Activated CD4-positive, alpha-beta T cell treated with anti-CD3 and anti-CD28 coated beads for 36 hours (primary cell): ENCODE measurements at regions of chr12 and their contacts with region 1.

Region 1: GRCh38 chr12:27498149-27498548 is 25.9 kb upstream of the PPFIBP1 start:
- DNase-seq: peak; percentile 13
- ATAC-seq: peak; percentile 93
- H3K4me3 Mint-ChIP-seq: no peak overlapping the region
- H3K27ac Mint-ChIP-seq: no peak overlapping the region
- H3K4me1 Mint-ChIP-seq: peaks cover 26% of the 10 kb centered on the region
- H3K27me3 Mint-ChIP-seq: peaks cover 46% of the 10 kb centered on the region

Region 2: GRCh38 chr12:27332407-27333301 is 165.5 kb before region 1 on chr12 and contains the start of gene BMAL2:
- CTCF ChIA-PET with region 1: no interaction called
- POLR2A ChIA-PET with region 1: no interaction called
- intact Hi-C with region 1: no loop called
- DNase-seq: peak; percentile 66
- ATAC-seq: peak; percentile 28
- H3K4me3 Mint-ChIP-seq: peak within 1 kb of the TSS; percentile 82
- H3K27ac Mint-ChIP-seq: peak within 1 kb of the TSS; percentile 90
- H3K4me1 Mint-ChIP-seq: peaks cover 42% of the 10 kb centered on the region
- H3K27me3 Mint-ChIP-seq: peaks cover 30% of the 10 kb centered on the region
- total RNA-seq, gene BMAL2: 10.9 to 13.2 TPM

Region 3: DNA sequence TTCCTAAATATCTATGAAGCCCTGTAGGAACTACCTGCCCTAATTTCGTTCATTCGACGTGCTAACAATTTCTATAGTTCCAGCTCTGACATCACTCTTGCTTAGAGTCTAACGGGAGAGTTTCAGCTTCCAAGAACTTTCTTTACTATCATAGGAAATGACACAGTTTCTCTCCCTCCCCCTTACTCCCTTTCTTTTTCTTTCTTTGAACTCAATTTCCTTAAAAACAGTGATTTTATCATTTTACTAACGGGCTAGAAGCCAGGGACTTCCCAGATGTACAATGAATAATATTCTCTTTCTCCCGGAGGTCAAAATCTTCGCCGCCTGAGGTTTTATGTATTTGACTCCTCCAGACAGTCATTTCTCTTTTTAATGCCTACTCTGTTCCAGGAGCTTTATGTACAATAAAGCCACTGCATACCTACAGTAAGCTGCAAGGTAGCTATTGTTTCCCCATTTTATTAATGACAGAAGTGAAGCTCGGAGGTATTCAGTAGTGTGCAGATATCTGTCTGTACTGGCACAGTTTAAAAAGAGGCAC is 35.9 kb before region 1 on chr12:
- CTCF ChIA-PET with region 1: no interaction called
- POLR2A ChIA-PET with region 1: no interaction called
- intact Hi-C with region 1: loop called (anchors 1 to 2 kb)
- DNase-seq: peak; percentile 35
- ATAC-seq: peak; percentile 51
- H3K4me3 Mint-ChIP-seq: no peak overlapping the region
- H3K27ac Mint-ChIP-seq: no peak overlapping the region
- H3K4me1 Mint-ChIP-seq: peaks cover 54% of the 10 kb centered on the region
- H3K27me3 Mint-ChIP-seq: peaks cover 14% of the 10 kb centered on the region

Region 4: DNA sequence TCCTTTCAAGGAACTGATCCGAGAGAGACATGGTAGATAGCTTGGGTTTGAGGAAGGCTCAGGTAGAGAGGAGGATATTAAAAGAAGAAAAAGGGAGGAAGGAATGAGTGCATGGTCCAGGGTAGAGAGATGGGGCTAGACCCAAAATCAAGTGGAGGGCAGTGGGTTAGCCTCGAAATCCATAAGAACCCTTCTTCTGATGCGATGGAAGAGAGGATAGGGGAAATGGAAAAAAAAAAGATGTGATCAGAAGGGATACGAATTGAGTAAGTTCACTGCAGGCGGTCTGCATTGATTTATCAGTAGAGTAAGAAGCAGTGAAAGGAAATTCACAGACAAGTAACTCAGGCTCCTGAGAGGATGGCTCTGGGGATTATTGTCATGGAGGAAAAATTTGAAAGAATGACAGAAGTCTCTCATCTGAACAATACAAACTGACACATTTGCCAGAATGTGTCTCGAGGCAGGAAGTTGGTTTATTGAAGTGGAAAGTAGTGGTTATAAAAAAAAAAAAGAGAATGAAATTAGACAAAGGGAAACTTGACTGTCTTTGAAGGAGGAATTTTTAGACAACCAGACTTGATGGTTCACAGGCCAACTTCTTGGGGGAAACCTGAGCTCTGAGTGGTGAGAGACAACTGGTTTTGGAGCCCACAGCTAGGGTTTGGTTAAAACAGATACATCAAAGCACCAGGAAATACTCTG is 36.1 kb after region 1 on chr12:
- CTCF ChIA-PET with region 1: no interaction called
- POLR2A ChIA-PET with region 1: no interaction called
- intact Hi-C with region 1: loop called (anchors 1 to 2 kb)
- DNase-seq: peak; percentile 50
- ATAC-seq: peak; percentile 84
- H3K4me3 Mint-ChIP-seq: peak overlapping the region; percentile 3
- H3K27ac Mint-ChIP-seq: peak overlapping the region; percentile 38
- H3K4me1 Mint-ChIP-seq: peaks cover 38% of the 10 kb centered on the region
- H3K27me3 Mint-ChIP-seq: no peaks in the 10 kb centered on the region